ENCODE measurements at regions of chr3 and their contacts with region 1.

Region 1: DNA sequence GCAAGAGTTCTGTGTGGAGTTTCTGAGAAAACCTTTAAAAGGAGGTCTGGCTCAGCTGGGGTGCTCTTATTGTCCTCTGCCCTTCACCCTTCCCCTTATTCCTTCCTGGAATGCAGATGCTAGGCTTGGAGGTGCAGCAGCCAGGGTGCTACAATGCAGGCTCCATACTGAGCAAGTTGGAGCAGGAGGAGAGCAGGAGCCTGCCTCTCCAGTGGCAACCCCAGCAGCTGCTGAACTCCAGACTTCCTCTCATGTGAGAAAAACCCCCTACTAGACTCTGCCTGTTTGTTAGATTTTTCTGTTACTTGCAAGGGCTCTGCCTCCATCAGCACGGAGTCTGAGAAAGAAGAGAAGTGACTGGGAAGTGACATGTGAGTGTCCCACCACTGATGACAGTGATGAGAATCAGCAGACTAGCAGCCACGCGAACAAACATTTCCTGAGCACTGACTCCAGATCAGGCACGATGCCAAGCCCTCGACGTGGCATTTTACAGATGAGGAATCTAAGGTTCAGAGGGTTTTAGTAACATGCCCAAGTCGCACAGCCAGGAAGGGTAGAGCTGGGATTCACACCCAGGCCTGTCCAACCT is 16.1 kb upstream of the RARRES1 start:
- DNase-seq: peak; percentile 70
- H3K4me3 ChIP-seq: no peak overlapping the region
- H3K27ac ChIP-seq: peak overlapping the region; percentile 23
- H3K4me1 ChIP-seq: peaks cover 4% of the 10 kb centered on the region
- H3K27me3 ChIP-seq: no peaks in the 10 kb centered on the region
- CTCF ChIP-seq: no peak
- POLR2A ChIP-seq: no peak

Region 2: DNA sequence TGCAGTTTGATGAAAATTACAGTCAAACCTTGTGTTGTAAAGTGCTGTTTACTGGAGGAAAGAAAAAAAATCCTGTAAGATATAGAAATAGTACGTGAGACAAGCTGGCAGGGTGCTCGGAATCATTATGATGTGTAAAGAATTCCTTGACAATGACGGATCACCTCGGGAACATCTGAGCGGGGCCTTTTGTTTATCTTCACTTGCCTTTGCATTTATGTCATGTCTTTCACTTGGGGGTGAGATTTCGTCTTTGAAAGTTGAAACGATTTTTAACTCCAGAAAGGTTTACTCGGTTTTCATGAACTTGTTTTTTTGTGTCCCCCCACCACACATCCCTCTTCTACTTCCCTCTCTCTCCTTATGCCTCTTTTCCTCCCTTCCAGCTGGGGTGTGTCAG is 1116.9 kb before region 1 on chr3:
- CTCF ChIA-PET with region 1: no interaction called
- POLR2A ChIA-PET with region 1: no interaction called
- dilution Hi-C with region 1: no loop called
- intact Hi-C with region 1: no loop called
- DNase-seq: no peak
- H3K4me3 ChIP-seq: no peak overlapping the region
- H3K27ac ChIP-seq: no peak overlapping the region
- H3K4me1 ChIP-seq: no peaks in the 10 kb centered on the region
- H3K27me3 ChIP-seq: peaks cover 9 to 19% of the 10 kb centered on the region in 2 experiments
- CTCF ChIP-seq: no peak
- POLR2A ChIP-seq: no peak

Region 3: GRCh38 chr3:158768361-158768787 is 20.0 kb after region 1 on chr3:
- CTCF ChIA-PET with region 1: interaction called, 6 read pairs
- POLR2A ChIA-PET with region 1: no interaction called
- dilution Hi-C with region 1: no loop called
- intact Hi-C with region 1: loop called (anchors 2 kb)
- DNase-seq: peak; percentile 75
- H3K4me3 ChIP-seq: no peak overlapping the region
- H3K27ac ChIP-seq: peak overlapping the region; percentile 3
- H3K4me1 ChIP-seq: peaks cover 23% of the 10 kb centered on the region
- H3K27me3 ChIP-seq: no peaks in the 10 kb centered on the region
- CTCF ChIP-seq: no peak
- POLR2A ChIP-seq: no peak